ENCODE measurements at regions of chr19 and their contacts with region 1.

Region 1: DNA sequence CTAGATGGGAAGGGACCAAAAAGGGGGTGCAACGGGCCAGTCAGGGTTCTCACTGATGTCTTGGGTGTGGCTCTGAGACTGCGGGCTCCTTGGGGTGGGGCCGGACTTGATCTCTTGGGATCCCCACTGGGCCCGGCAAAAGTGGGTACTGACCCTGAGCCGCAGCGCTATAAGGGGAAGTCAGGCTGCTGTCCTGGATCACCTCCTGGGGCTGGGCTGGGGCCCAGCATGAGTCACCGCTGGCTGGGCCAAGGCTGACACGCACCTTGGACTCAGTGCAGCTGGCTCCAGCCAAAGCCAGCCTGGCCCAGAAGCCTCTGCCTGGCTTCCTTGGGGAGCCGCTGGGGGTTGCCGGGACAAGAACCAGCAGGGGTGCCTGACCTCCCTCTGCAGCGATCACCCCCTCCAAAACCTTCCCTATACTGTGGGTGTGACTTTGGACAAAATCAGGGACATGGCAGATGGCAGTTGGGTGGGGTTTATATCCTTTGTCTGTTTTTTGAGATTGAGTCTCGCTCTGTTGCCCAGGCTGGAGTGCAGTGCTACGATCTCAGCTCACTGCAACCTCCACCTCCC is 617 bp upstream of the IQCN start:
- DNase-seq: peak; percentile 82
- ATAC-seq: peak; percentile 84
- H3K4me3 ChIP-seq: peak overlapping the region in 2 of 3 experiments; percentile 23 to 50; a peak in 3 of 6 replicates
- H3K27ac ChIP-seq: peak overlapping the region; percentile 73
- H3K4me1 ChIP-seq: peaks cover 66% of the 10 kb centered on the region
- H3K27me3 ChIP-seq: no peaks in the 10 kb centered on the region
- CTCF ChIP-seq: peak; percentile 42
- EP300 ChIP-seq: peak; percentile 44 to 61; a peak in 3 of 4 replicates
- POLR2A ChIP-seq: peak in 1 of 2 experiments; percentile 75
- RAD21 ChIP-seq: peak; percentile 39

Region 2: DNA sequence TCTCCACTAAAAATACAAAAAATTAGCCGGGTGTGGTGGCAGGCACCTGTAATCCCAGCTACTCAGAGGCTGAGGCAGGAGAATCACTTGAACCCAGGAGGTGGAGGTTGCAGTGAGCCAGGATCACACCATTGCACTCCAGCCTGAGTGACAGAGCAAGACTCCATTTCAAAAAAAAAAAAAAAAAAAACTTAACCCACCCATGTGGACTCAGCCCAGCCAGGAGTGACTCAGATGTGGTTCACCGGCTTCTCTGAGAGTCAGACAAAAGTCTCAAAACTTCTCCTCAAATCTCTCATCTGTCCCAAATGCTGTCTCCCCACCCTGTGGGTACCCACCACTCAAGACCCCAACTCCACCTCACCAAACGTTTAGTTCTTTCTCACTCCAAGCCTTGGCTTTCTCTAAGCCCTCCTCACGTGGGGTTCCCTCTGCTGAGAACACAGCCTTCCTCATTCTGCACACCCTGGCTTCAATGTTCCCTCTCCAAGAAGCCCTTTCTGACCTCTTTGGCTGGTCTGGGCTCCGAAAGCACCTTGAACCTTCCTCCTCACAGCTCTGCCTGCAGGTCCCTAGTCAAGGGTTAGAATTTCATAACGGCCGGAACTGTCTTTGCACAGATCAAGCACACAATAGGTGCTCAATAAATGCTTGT is 60.0 kb before region 1 on chr19:
- CTCF ChIA-PET with region 1: no interaction called
- POLR2A ChIA-PET with region 1: no interaction called
- in situ Hi-C with region 1: no loop called
- intact Hi-C with region 1: no loop called
- DNase-seq: no peak
- ATAC-seq: no peak
- H3K4me3 ChIP-seq: no peak overlapping the region
- H3K27ac ChIP-seq: no peak overlapping the region
- H3K4me1 ChIP-seq: no peaks in the 10 kb centered on the region
- H3K27me3 ChIP-seq: peaks cover 2 to 14% of the 10 kb centered on the region in 2 experiments; a peak in 3 of 5 replicates
- CTCF ChIP-seq: no peak
- EP300 ChIP-seq: no peak
- POLR2A ChIP-seq: no peak
- RAD21 ChIP-seq: no peak

Region 3: GRCh38 chr19:18322759-18323460 is 48.0 kb after region 1 on chr19 and contains the start of gene LSM4:
- CTCF ChIA-PET with region 1: interaction called, 50 read pairs
- POLR2A ChIA-PET with region 1: interaction called, 278 read pairs
- in situ Hi-C with region 1: loop called (anchors 5 kb)
- intact Hi-C with region 1: loop called (anchors 1 kb)
- DNase-seq: peak; percentile 95
- ATAC-seq: peak; percentile 88
- H3K4me3 ChIP-seq: peak within 1 kb of the TSS; percentile 69 to 80 (median 72)
- H3K27ac ChIP-seq: peak within 1 kb of the TSS; percentile 84
- H3K4me1 ChIP-seq: peaks cover 73% of the 10 kb centered on the region
- H3K27me3 ChIP-seq: no peaks in the 10 kb centered on the region
- CTCF ChIP-seq: peak; percentile 59
- EP300 ChIP-seq: no peak
- POLR2A ChIP-seq: peak; percentile 66 to 69
- RAD21 ChIP-seq: peak; percentile 51
- total RNA-seq, gene LSM4: 166 and 188 TPM in 2 replicates

Region 4: DNA sequence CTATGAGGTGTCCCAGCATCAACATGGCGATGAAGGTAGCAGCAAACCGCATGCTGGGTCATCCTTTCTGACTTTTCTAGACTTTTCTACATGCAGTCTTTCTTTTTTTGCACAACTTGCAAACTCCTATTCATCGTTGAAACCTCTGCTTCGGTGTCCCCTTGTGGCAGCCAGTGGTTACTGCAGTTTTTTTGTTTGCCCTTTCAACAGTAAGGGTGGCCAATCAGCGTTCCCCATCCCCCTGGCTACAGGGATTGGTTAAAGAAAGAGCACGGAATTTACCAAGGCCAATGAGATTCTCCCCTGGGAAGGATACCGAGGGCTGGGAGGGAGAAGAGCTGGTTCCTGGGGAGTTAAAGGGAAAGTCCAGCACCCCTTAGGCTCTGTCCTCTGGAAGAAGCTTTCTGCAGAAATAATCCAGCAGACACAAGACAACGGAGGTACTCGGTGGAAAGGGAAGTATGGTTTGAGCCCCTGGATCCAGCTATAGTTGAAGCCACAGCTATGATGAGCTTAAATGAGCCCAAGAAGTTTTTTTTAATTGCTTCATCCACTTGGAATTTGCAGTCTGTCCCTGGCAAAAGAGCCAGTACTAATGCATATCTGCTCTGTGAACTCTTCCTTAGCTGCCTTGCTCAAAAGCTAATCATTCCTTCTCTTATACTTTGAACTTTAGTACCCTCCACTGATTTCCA is 53.6 kb after region 1 on chr19:
- CTCF ChIA-PET with region 1: interaction called, 50 read pairs
- POLR2A ChIA-PET with region 1: interaction called, 110 read pairs
- in situ Hi-C with region 1: loop called (anchors 5 kb)
- intact Hi-C with region 1: loop called (anchors 1 kb)
- DNase-seq: peak; percentile 97
- ATAC-seq: peak; percentile 92
- H3K4me3 ChIP-seq: peak overlapping the region; percentile 9 to 59 (median 29)
- H3K27ac ChIP-seq: peak overlapping the region; percentile 69
- H3K4me1 ChIP-seq: peaks cover 73% of the 10 kb centered on the region
- H3K27me3 ChIP-seq: no peaks in the 10 kb centered on the region
- CTCF ChIP-seq: peak; percentile 90
- EP300 ChIP-seq: 0 out of 4 replicates have a peak, but pooled peaks of 1 of the 2 experiments have one; percentile 9
- POLR2A ChIP-seq: peak in 1 of 2 experiments; percentile 71; a peak in 2 of 4 replicates
- RAD21 ChIP-seq: peak; percentile 58; the same call in 1 of the 2 replicates